ENCODE measurements at regions of chr6 and their contacts with region 1.

Region 1: DNA sequence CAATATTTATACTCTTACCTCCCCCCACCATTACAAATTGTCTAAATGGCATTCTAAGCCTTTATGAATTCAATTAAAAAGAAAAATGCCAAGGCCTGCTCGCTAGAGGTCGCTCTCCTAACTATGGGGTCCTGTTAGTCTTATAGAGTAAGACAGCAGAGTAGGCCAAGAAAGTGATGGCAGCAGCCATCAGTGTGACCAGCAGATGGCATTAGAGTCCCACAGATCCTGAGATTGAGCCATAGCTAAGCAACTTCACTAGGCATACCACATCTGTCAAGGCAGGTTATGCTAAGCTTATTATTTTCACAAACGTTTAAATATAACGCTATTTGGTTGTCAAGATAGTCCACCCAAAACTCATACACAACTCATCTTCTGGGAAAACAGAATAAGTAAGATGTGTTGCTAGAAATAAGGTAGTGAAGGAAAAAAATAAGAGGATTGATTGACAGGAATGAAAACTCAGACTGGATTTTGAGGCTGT is 57.6 kb upstream of the SCAF8 start:
- DNase-seq: peak; percentile 96
- H3K4me3 Mint-ChIP-seq: no peak overlapping the region
- H3K27ac Mint-ChIP-seq: no peak overlapping the region
- H3K4me1 Mint-ChIP-seq: no peaks in the 10 kb centered on the region
- H3K27me3 Mint-ChIP-seq: no peaks in the 10 kb centered on the region

Region 2: DNA sequence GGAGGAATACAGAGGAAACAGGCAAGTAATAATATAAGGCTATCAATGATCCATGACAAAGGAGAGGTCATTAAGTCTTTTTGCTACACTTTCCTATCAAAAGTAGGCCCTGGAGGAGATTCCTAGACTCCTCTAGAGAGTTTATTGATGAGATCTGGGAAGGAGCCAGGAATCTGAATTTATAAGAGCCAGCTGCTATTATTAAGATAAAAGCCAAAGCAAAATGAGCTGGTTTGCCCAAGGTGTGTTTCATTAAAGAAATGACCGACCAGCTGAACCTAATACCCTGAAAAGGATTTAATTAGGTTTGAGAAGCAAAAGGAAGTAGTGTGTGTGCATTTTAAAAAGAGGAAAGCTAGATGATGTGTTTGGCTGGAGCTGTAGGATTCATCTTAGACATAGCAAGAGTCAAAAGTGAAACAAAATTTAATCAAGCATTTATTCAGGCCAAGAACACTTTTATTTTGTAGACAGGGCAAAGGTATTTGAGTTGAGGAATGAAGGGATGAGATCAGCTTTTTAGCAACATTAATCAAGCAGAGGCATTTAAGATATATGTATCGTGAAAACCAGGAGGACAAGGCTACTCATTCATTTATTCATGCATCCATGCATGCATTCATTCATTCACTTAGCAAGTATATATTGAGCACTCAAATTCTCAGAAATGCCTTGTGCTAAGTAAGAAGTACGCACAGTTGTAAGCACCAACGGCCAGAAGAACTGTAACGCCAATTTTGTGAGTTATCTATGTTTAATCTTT is 14.0 kb after region 1 on chr6:
- CTCF ChIA-PET with region 1: interaction called, 24 read pairs
- intact Hi-C with region 1: no loop called
- DNase-seq: no peak
- H3K4me3 Mint-ChIP-seq: no peak overlapping the region
- H3K27ac Mint-ChIP-seq: no peak overlapping the region
- H3K4me1 Mint-ChIP-seq: no peaks in the 10 kb centered on the region
- H3K27me3 Mint-ChIP-seq: no peaks in the 10 kb centered on the region

Region 3: GRCh38 chr6:154733012-154733625 is 57.5 kb after region 1 on chr6 and contains the start of gene SCAF8:
- CTCF ChIA-PET with region 1: interaction called, 15 read pairs
- intact Hi-C with region 1: loop called (anchors 1 kb)
- DNase-seq: peak; percentile 83
- H3K4me3 Mint-ChIP-seq: peak within 1 kb of the TSS; percentile 85
- H3K27ac Mint-ChIP-seq: peak within 1 kb of the TSS; percentile 93
- H3K4me1 Mint-ChIP-seq: peaks cover 44% of the 10 kb centered on the region
- H3K27me3 Mint-ChIP-seq: no peaks in the 10 kb centered on the region
- total RNA-seq, gene SCAF8: 27.2 to 28.0 TPM

Region 4: DNA sequence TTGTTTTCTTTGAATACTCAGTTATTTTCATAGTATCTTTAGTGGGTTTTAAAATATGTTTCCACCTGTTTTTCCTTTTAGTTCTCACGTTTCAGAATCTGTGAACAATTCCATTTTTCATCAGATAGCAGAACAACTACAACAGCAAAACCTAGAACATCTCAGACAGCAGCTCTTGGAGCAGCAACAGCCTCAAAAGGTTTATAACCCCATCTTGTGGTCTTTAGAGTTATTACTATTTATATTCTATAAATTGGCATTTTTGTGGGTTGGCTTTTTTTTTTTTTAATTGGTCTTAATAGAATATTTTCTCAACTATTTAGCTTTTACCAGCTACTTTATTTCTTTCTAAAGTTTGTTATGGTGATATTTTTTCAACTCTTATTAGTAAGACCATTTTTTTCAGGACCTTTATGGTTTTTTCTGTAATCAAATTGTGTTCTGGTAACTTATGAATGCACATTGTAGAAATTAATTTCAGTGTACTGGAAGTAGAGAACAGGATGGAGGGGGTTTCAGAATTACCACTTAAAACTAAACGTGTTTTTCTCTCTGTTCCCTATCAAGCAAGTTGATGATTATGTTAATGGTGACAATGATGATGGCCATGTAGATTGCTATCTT is 129.8 kb after region 1 on chr6:
- CTCF ChIA-PET with region 1: interaction called, 128 read pairs
- intact Hi-C with region 1: loop called (anchors 1 kb)
- DNase-seq: no peak
- H3K4me3 Mint-ChIP-seq: no peak overlapping the region
- H3K27ac Mint-ChIP-seq: no peak overlapping the region
- H3K4me1 Mint-ChIP-seq: peaks cover 6% of the 10 kb centered on the region
- H3K27me3 Mint-ChIP-seq: no peaks in the 10 kb centered on the region

Region 5: DNA sequence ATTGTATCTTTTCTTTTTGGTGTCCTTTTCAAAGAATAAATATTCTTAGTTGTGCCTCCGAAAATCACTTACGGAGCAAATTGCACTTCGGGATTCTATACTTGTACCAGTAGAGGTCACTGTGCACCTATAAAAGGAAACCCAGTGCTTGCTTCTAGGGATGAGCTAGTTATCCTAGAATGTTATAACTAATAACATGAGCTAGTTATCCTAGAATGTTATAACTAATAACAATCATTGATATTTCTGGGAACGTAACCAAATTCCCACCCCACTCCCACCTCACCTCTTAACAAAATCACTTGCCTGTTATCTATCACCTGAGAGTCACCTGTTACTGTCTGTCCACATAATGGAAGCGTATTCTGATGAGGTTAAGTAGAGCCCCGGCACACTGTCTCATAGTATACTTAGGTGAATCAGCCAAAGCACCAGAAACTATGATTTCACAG is 192.5 kb after region 1 on chr6:
- CTCF ChIA-PET with region 1: interaction called, 4 read pairs
- intact Hi-C with region 1: loop called (anchors 1 kb)
- DNase-seq: no peak
- H3K4me3 Mint-ChIP-seq: no peak overlapping the region
- H3K27ac Mint-ChIP-seq: no peak overlapping the region
- H3K4me1 Mint-ChIP-seq: peaks cover 18% of the 10 kb centered on the region
- H3K27me3 Mint-ChIP-seq: no peaks in the 10 kb centered on the region

Region 6: GRCh38 chr6:154928325-154928922 is 252.8 kb after region 1 on chr6:
- CTCF ChIA-PET with region 1: interaction called, 23 read pairs
- intact Hi-C with region 1: loop called (anchors 1 kb)
- DNase-seq: peak; percentile 88
- H3K4me3 Mint-ChIP-seq: no peak overlapping the region
- H3K27ac Mint-ChIP-seq: no peak overlapping the region
- H3K4me1 Mint-ChIP-seq: peaks cover 3% of the 10 kb centered on the region
- H3K27me3 Mint-ChIP-seq: no peaks in the 10 kb centered on the region

Region 7: GRCh38 chr6:155510879-155511278 is 835.2 kb after region 1 on chr6:
- CTCF ChIA-PET with region 1: no interaction called
- intact Hi-C with region 1: loop called (anchors 10 kb)
- DNase-seq: peak; percentile 40
- H3K4me3 Mint-ChIP-seq: no peak overlapping the region
- H3K27ac Mint-ChIP-seq: peak overlapping the region; percentile 73
- H3K4me1 Mint-ChIP-seq: peaks cover 23% of the 10 kb centered on the region
- H3K27me3 Mint-ChIP-seq: no peaks in the 10 kb centered on the region